Activated T-helper 2 cell treated with anti-CD3 and anti-CD28 coated beads, Interferon-gamma antibody, Interleukin-2, Interleukin-4, amounts not matched to agents 10 μg/mL and 5 μg/mL and 100 μg/mL, durations not matched to agents 14 hours and 24 hours and 36 hours (primary cell): ENCODE measurements at regions of chr13 and their contacts with region 1.

Region 1: DNA sequence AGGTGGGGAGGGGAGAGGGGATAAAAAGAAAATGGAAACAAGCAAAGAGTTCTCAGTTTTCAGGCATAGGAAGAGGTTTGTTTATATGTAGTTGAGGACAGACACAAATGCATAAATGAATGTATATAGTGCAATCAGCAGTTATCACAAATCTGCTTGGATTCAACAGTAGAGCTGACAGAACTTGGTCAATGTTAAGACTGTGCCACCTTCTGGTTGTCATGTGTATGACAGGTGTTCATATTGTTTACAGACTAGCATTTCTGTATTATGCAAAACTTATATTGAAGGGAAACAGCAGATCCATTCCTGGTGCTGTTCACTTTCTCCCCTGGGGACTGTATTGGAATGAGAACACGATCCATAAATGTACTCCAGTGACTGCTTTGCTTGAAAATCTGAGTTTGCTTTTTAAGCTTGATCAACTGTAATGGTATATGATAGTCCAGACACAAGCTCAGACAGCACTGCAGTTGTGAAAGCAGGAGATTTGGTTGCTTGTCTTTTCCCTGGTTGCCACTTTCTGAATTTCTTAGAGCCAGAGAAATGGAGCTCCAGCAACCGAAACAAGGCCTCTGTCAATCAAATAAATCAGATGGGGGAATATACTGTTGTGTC is 319.5 kb upstream of the OBI1 start:
- DNase-seq: no peak
- H3K4me3 Mint-ChIP-seq: no peak overlapping the region
- H3K27ac Mint-ChIP-seq: no peak overlapping the region
- H3K4me1 Mint-ChIP-seq: no peaks in the 10 kb centered on the region
- H3K27me3 Mint-ChIP-seq: peaks cover 9% of the 10 kb centered on the region

Region 2: DNA sequence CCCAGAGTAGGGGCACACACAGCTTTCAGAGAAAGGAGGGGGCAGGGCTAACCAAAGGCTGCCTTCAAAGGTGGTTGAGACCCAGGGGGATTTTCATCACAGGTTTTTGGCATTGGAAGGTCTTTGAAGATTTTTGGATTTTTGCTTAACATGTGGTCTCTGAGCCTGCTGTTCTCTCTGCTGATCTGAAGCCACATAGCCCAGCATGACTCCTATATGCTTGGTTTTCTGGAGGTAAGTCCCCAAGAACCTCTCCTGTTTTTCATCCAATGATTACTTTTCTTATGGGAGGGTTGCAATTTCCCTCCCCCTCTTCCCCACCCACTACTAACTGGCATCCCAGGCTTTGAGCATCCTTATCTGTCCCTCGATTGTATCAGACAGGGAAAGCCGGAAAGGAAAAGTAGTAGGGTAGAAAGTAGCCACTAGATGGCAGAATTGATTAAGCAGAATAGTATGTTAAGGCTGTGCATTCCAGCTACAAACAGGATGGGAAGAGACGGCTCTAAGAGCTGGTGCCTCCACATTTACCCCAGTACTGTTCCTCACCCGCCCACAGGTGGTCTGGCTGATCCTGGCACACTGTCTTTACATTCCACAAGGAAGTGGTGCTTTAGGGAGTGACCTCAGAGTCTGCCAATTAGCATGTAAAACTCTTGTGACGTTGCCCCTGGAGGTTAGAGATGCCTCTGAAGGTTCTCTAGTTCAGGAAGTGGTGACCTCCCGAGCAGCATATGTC is 840.9 kb before region 1 on chr13:
- intact Hi-C with region 1: loop called (anchors 1 kb)
- DNase-seq: no peak
- H3K4me3 Mint-ChIP-seq: peak overlapping the region; percentile 18
- H3K27ac Mint-ChIP-seq: no peak overlapping the region
- H3K4me1 Mint-ChIP-seq: peaks cover 5% of the 10 kb centered on the region
- H3K27me3 Mint-ChIP-seq: no peaks in the 10 kb centered on the region

Region 3: DNA sequence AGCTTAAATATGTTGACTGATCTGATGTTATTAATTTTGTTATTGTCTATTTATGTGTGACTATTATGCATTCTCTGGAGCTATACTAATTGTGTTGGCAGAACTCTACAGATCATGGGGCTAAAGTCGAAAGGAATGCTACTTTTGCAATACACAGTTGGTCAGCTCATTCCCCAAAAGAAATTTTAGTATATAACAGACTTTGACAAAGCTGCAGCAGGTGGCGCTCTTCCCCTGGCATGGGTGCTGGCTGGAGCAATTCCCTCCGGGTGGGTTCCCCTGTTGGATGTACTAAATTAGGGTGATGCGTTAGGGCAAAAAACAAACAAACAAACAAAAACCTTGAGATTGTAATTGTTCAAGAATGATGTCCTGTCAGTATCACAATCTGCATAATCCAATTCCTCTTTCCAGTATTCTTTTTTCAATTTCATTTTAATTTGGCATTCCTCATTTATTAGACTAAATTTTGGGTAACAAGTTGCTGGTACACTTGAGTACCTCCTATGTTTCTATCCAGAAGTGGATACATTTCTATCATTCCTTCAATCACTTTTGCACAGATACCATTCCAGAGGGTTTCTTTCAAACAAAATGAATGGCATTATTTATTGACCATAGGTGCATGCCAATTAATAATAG is 737.1 kb before region 1 on chr13:
- intact Hi-C with region 1: loop called (anchors 5 kb)
- DNase-seq: no peak
- H3K4me3 Mint-ChIP-seq: no peak overlapping the region
- H3K27ac Mint-ChIP-seq: no peak overlapping the region
- H3K4me1 Mint-ChIP-seq: no peaks in the 10 kb centered on the region
- H3K27me3 Mint-ChIP-seq: no peaks in the 10 kb centered on the region

Region 4: DNA sequence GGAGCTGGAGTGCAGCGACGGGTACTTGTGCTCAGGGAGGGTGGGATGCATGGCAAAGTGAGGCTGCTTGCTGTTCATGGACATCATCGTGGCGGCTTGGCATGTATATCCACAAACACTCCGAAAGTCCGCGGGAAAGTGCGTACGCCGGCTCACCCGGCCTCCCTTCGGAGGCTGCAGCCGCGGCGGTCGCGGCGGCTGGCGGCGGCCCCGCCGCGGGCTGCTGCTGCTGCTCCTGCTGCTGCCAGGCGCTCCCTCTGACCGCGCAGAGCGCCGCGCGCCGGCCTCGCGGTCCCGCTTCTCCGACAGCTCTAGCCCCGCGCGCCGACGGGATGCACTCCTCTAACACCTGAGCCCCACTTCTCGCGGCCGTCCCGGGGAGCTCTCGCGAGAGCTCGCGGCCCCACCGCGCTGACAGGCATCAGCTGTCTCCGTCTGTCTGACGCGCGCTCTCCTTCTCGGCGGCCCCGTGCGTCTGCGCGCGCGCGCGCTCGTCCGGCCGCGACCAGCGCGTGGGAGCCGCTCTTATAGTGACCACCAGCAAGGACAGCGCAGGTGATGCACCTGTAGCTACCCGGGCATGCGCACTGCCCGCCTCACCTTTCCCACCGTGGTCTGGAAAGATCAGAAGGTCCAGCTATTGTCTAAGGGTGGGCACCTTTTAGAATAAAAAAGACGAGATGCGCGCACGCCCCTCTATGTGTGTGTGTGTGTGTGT is 375.1 kb before region 1 on chr13 and contains the start of gene POU4F1:
- intact Hi-C with region 1: loop called (anchors 10 kb)
- DNase-seq: peak; percentile 68
- H3K4me3 Mint-ChIP-seq: peak within 1 kb of the TSS; percentile 83
- H3K27ac Mint-ChIP-seq: peak within 1 kb of the TSS; percentile 62
- H3K4me1 Mint-ChIP-seq: peaks cover 38% of the 10 kb centered on the region
- H3K27me3 Mint-ChIP-seq: peaks cover 87% of the 10 kb centered on the region
- total RNA-seq, gene POU4F1: 0.11 TPM in 1 of 2 replicates, not detected in the other

Region 5: GRCh38 chr13:79710376-79710775 is 731.9 kb after region 1 on chr13:
- intact Hi-C with region 1: no loop called
- DNase-seq: no peak
- H3K4me3 Mint-ChIP-seq: no peak overlapping the region
- H3K27ac Mint-ChIP-seq: no peak overlapping the region
- H3K4me1 Mint-ChIP-seq: no peaks in the 10 kb centered on the region
- H3K27me3 Mint-ChIP-seq: no peaks in the 10 kb centered on the region